ENCODE measurements at regions of chr18 and their contacts with region 1.

Region 1: GRCh38 chr18:32289483-32290075 is 99.7 kb downstream of the MEP1B start:
- DNase-seq: peak; percentile 54 to 82
- H3K4me3 ChIP-seq: no peak overlapping the region
- H3K27ac ChIP-seq: no peak overlapping the region
- H3K4me1 ChIP-seq: no peaks in the 10 kb centered on the region
- H3K27me3 ChIP-seq: no peaks in the 10 kb centered on the region
- CTCF ChIP-seq: peak in 5 of 7 experiments; percentile 36 to 70 (median 50)
- EP300 ChIP-seq: no peak
- POLR2A ChIP-seq: no peak

Region 2: GRCh38 chr18:32470713-32471633 is 181.4 kb after region 1 on chr18 and contains the start of gene GAREM1:
- intact Hi-C with region 1: loop called (anchors 5 kb)
- DNase-seq: peak; percentile 96 to 99
- H3K4me3 ChIP-seq: peak within 1 kb of the TSS; percentile 71 to 92 (median 82)
- H3K27ac ChIP-seq: peak within 1 kb of the TSS; percentile 86 to 94 (median 93)
- H3K4me1 ChIP-seq: peaks cover 8 to 44% (median 28%) of the 10 kb centered on the region in 4 donors
- H3K27me3 ChIP-seq: no peaks in the 10 kb centered on the region
- CTCF ChIP-seq: peak in 5 of 7 experiments; percentile 42 to 84 (median 71)
- EP300 ChIP-seq: no peak
- POLR2A ChIP-seq: peak in 1 of 4 donors; percentile 67
- total RNA-seq, gene GAREM1: 5.2 to 60.3 (median 32.9) TPM

Region 3: DNA sequence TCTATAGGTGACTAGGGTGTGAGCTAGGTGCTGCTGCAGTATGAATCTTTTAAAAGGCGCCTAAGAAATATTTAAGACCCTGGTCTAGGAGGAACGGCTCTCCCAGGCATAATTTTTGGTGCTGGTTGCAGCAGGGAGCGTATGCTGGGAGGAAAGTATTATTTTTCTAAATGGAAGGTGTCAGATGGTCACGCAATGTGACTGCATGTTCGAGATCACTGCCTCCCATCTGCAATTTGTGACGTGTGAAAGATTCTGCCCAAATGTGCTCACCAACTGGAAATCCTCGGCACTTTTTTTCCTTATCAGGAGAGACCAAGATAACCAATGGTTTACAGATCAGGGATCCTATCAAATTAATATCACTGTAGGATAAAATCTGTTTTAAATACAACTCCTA is 578.8 kb after region 1 on chr18:
- intact Hi-C with region 1: no loop called
- DNase-seq: no peak
- H3K4me3 ChIP-seq: no peak overlapping the region
- H3K27ac ChIP-seq: no peak overlapping the region
- H3K4me1 ChIP-seq: no peaks in the 10 kb centered on the region
- H3K27me3 ChIP-seq: peaks cover 0 to 6% (median 0%) of the 10 kb centered on the region in 3 donors
- CTCF ChIP-seq: no peak
- EP300 ChIP-seq: no peak
- POLR2A ChIP-seq: no peak